ENCODE measurements at regions of chr19 and their contacts with region 1.

Region 1: DNA sequence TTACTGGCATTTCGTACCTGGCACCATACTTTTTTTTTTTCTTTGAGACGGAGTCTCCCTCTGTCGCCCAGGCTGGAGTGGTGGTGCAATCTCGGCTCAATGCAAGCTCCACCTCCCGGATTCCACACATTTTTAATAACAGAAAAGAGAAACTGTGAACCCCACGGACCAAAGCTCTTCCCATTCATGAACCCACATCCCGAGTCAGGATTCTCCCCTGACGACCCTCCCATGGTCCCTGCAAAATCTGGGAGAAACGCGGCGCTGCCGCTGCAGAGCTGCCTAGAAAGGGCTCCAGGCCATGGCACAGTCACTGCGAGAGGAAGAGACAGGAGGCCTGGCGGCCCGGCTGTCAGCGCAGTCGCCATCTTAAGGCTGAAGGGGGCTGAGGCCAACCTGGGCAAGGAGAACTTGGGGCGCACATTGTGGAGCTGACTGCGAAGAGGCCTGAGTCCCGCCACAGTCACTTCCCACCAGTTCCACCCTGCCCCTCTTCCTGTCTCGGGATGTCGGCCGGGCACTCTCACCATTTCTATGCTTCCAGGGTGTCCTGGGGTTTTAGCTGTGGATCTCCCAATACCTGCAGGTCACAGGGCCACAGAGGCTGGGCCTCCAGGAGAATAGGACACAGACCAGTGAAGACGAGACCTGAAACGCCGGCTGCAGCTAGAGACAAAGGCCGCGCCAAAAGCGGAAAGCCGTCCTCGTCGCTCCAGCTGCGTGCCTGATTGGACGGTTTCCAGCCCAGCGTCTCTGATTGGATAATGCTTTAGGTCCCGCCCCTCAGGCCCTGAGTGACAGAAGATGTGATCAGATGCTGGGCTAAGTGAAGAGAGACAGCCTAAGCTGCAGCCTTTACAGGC is 71.0 kb downstream of the ZNF486 start:
- DNase-seq: peak; percentile 95
- ATAC-seq: peak; percentile 96
- H3K4me3 Mint-ChIP-seq: peak overlapping the region; percentile 90
- H3K27ac Mint-ChIP-seq: peak overlapping the region; percentile 91
- H3K4me1 Mint-ChIP-seq: peaks cover 4% of the 10 kb centered on the region
- H3K27me3 Mint-ChIP-seq: no peaks in the 10 kb centered on the region

Region 2: GRCh38 chr19:19997656-19998268 is 240.2 kb before region 1 on chr19:
- CTCF ChIA-PET with region 1: interaction called, 10 read pairs
- POLR2A ChIA-PET with region 1: interaction called, 7 read pairs
- intact Hi-C with region 1: loop called in 1 of 2 experiments (anchors 5 kb)
- DNase-seq: peak; percentile 72
- ATAC-seq: peak; percentile 33
- H3K4me3 Mint-ChIP-seq: no peak overlapping the region
- H3K27ac Mint-ChIP-seq: no peak overlapping the region
- H3K4me1 Mint-ChIP-seq: no peaks in the 10 kb centered on the region
- H3K27me3 Mint-ChIP-seq: no peaks in the 10 kb centered on the region

Region 3: GRCh38 chr19:20051841-20052768 is 185.9 kb before region 1 on chr19:
- CTCF ChIA-PET with region 1: no interaction called
- POLR2A ChIA-PET with region 1: no interaction called
- intact Hi-C with region 1: loop called in 1 of 2 experiments (anchors 1 kb)
- DNase-seq: peak; percentile 86
- ATAC-seq: peak; percentile 92
- H3K4me3 Mint-ChIP-seq: peak overlapping the region; percentile 89
- H3K27ac Mint-ChIP-seq: peak overlapping the region; percentile 92
- H3K4me1 Mint-ChIP-seq: peaks cover 13% of the 10 kb centered on the region
- H3K27me3 Mint-ChIP-seq: peaks cover 3% of the 10 kb centered on the region

Region 4: DNA sequence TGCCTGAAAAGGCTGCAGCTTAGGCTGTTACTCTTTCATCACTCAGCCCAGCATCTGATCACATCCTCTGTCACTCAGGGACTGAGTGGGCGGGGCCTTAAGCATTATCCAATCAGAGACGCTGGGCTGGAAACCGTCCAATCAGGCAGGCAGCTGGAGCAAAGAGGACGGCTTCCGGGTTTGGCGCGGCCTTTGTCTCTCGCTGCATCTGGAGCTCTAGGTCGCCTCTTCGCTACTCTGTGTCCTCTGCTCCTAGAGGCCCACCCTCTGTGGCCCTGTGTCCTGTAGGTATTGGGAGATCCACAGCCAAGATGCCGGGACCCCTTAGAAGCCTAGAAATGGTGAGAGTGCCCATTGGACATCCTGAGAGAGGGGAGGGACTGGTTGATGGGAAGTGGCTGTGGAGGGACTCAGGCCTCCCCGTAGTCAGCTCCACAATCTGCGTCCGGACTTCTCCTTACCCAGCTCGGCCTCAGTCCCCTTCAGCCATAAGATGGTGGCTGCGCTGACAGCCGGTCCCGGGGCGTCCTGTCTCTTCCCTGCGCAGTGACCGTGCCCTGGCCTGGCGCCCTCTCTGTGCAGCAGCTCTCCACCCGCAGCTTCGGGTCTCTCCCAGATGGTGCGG is 70.9 kb before region 1 on chr19 and contains the start of gene ZNF486:
- CTCF ChIA-PET with region 1: no interaction called
- POLR2A ChIA-PET with region 1: interaction called, 3 read pairs
- intact Hi-C with region 1: loop called (anchors 1 to 2 kb)
- DNase-seq: peak; percentile 97
- ATAC-seq: peak; percentile 99
- H3K4me3 Mint-ChIP-seq: peak within 1 kb of the TSS; percentile 99
- H3K27ac Mint-ChIP-seq: peak within 1 kb of the TSS; percentile 97
- H3K4me1 Mint-ChIP-seq: peaks cover 34% of the 10 kb centered on the region
- H3K27me3 Mint-ChIP-seq: no peaks in the 10 kb centered on the region
- total RNA-seq, gene ZNF486: 16.1 to 18.1 TPM

Region 5: DNA sequence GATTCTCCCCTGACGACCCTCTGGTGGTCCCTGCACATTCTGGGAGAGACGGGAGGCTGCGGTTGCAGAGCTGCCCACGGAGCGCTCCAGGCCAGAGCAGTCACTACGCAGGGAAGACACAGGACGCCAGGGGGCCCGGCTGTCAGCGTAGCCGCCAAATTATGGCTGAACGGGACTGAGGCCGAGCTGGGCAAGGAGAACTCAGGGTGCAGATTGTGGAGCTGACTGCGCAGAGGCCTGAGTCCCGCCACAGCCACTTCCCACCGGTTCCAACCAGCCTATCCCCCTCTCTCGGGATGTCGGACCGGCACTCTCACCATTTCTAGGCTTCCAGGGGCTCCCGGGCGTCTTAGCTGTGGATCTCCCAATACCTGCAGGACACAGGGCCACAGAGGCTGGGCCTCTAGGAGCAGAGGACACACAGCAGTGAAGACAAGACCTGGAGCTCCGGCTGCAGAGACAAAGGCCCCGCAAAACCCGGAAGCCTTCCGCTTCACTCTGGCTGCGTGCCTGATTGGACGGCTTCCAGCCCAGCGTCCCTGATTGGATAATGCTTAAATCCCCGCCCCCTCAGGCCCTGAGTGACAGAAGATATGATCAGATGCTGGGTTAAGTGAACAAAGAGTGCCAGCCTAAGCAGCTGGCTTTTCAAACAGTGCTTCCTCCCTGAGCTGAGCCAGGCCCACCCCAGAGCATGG is 327.5 kb after region 1 on chr19 and contains the start of gene ZNF737:
- CTCF ChIA-PET with region 1: interaction called, 3 read pairs
- POLR2A ChIA-PET with region 1: no interaction called
- intact Hi-C with region 1: loop called in 1 of 2 experiments (anchors 5 kb)
- DNase-seq: peak; percentile 97
- ATAC-seq: peak; percentile 97
- H3K4me3 Mint-ChIP-seq: peak within 1 kb of the TSS; percentile 98
- H3K27ac Mint-ChIP-seq: peak within 1 kb of the TSS; percentile 98
- H3K4me1 Mint-ChIP-seq: peaks cover 19% of the 10 kb centered on the region
- H3K27me3 Mint-ChIP-seq: no peaks in the 10 kb centered on the region
- total RNA-seq, gene ZNF737: 13.9 to 16.4 TPM

Region 6: GRCh38 chr19:20776083-20777076 is 538.4 kb after region 1 on chr19 and contains the start of gene ZNF66:
- CTCF ChIA-PET with region 1: interaction called, 4 read pairs
- POLR2A ChIA-PET with region 1: interaction called, 3 read pairs
- intact Hi-C with region 1: loop called in 1 of 2 experiments (anchors 5 kb)
- DNase-seq: peak; percentile 96
- ATAC-seq: peak; percentile 98
- H3K4me3 Mint-ChIP-seq: peak within 1 kb of the TSS; percentile 98
- H3K27ac Mint-ChIP-seq: peak within 1 kb of the TSS; percentile 98
- H3K4me1 Mint-ChIP-seq: peaks cover 7% of the 10 kb centered on the region
- H3K27me3 Mint-ChIP-seq: no peaks in the 10 kb centered on the region
- total RNA-seq, gene ZNF66: 8.8 to 11.1 TPM

Region 7: GRCh38 chr19:21474671-21475181 is 1236.7 kb after region 1 on chr19:
- CTCF ChIA-PET with region 1: no interaction called
- POLR2A ChIA-PET with region 1: interaction called, 5 read pairs
- intact Hi-C with region 1: loop called in 1 of 2 experiments (anchors 2 kb)
- DNase-seq: peak; percentile 93
- ATAC-seq: peak; percentile 100
- H3K4me3 Mint-ChIP-seq: peak overlapping the region; percentile 77
- H3K27ac Mint-ChIP-seq: peak overlapping the region; percentile 65
- H3K4me1 Mint-ChIP-seq: no peaks in the 10 kb centered on the region
- H3K27me3 Mint-ChIP-seq: no peaks in the 10 kb centered on the region

Measured in activated CD4-positive, alpha-beta T cell treated with anti-CD3 and anti-CD28 coated beads for 36 hours (primary cell).